ENCODE measurements at regions of chr16 and their contacts with region 1.

Region 1: GRCh38 chr16:24776501-24777220 is 47.2 kb downstream of the TNRC6A start:
- DNase-seq: peak; percentile 37
- H3K4me3 ChIP-seq: peak overlapping the region; percentile 32
- H3K27ac ChIP-seq: peak overlapping the region; percentile 70
- H3K4me1 ChIP-seq: peaks cover 90% of the 10 kb centered on the region
- H3K27me3 ChIP-seq: no peaks in the 10 kb centered on the region
- CTCF ChIP-seq: no peak

Region 2: GRCh38 chr16:24717411-24717810 is 59.2 kb before region 1 on chr16:
- intact Hi-C with region 1: loop called (anchors 10 kb)
- DNase-seq: no peak
- H3K4me3 ChIP-seq: no peak overlapping the region
- H3K27ac ChIP-seq: no peak overlapping the region
- H3K4me1 ChIP-seq: peaks cover 10% of the 10 kb centered on the region
- H3K27me3 ChIP-seq: no peaks in the 10 kb centered on the region
- CTCF ChIP-seq: no peak

Region 3: GRCh38 chr16:24957887-24958286 is 181.2 kb after region 1 on chr16:
- intact Hi-C with region 1: no loop called
- DNase-seq: no peak
- H3K4me3 ChIP-seq: no peak overlapping the region
- H3K27ac ChIP-seq: peak overlapping the region; percentile 45
- H3K4me1 ChIP-seq: peaks cover 12% of the 10 kb centered on the region
- H3K27me3 ChIP-seq: no peaks in the 10 kb centered on the region
- CTCF ChIP-seq: no peak